Ascending aorta (tissue), 2 donors: ENCODE measurements at regions of chr2 and their contacts with region 1.

Region 1: GRCh38 chr2:8169443-8169842 is 512.4 kb upstream of the ID2 start:
- DNase-seq: no peak
- H3K4me3 ChIP-seq: no peak overlapping the region
- H3K27ac ChIP-seq: peak overlapping the region; percentile 28 to 63
- H3K4me1 ChIP-seq: peaks cover 0 to 7% of the 10 kb centered on the region in 2 donors
- H3K27me3 ChIP-seq: no peaks in the 10 kb centered on the region
- CTCF ChIP-seq: no peak

Region 2: GRCh38 chr2:8148260-8149008 is 21.0 kb before region 1 on chr2:
- intact Hi-C with region 1: loop called (anchors 2 kb)
- DNase-seq: peak in 1 of 2 donors; percentile 87
- H3K4me3 ChIP-seq: no peak overlapping the region
- H3K27ac ChIP-seq: peak overlapping the region; percentile 55 to 66
- H3K4me1 ChIP-seq: peaks cover 0 to 26% of the 10 kb centered on the region in 2 donors
- H3K27me3 ChIP-seq: no peaks in the 10 kb centered on the region
- CTCF ChIP-seq: no peak